ENCODE measurements at regions of chr1 and their contacts with region 1.

Region 1: GRCh38 chr1:38118976-38119375 is 72.4 kb upstream of the POU3F1 start:
- DNase-seq: no peak
- CTCF ChIP-seq: no peak

Region 2: DNA sequence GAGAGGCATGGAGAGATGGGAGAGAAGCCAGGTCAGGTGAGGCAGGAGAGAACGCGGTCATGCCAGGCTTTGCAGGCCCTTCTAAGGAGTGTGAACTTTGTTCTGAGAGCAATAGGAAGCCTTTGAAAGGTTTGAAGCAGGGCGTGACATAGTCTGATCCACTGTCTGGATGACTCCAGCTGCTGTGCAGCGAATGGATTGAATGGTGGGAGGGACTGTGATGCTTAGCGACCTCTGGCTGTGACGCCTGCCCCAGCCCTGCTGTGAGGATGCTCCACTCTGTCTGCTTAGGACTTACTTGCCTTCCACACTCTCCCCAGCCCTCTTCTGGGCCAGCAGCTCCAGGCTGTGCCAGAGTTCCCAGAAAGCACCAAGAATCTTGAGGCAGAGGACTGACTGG is 30.6 kb before region 1 on chr1:
- CTCF ChIA-PET with region 1: no interaction called
- POLR2A ChIA-PET with region 1: no interaction called
- DNase-seq: no peak
- CTCF ChIP-seq: no peak

Region 3: DNA sequence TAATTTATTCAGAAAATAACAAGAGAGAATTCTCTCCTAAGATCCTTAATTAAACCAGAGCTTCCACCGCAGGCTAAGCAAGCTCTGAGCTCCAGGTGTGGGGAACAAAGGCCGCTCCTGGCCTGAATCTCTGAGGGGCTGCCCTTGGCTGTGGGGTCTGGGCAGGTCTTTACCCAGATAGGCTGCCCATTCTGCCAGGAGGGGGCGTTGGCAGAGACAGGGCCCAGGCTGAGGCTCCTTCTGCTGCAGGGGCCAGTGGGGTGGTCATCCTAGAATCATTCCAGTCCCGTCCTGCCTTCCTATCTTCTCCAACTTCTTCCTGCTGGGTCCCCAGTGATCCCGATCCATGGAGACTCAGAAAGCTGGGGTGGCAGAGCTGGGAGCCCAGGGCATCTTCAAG is 10.5 kb after region 1 on chr1:
- CTCF ChIA-PET with region 1: interaction called, 16 read pairs
- POLR2A ChIA-PET with region 1: no interaction called
- DNase-seq: no peak
- CTCF ChIP-seq: peak; percentile 12

Region 4: GRCh38 chr1:38246955-38247952 is 128.3 kb after region 1 on chr1:
- CTCF ChIA-PET with region 1: no interaction called
- POLR2A ChIA-PET with region 1: no interaction called
- DNase-seq: no peak
- CTCF ChIP-seq: no peak